Mammary epithelial cell (primary cell): ENCODE measurements at regions of chr16 and their contacts with region 1.

Region 1: GRCh38 chr16:19067349-19068236 is at the start of gene COQ7:
- DNase-seq: peak; percentile 99
- H3K4me3 ChIP-seq: peak within 1 kb of the TSS; percentile 65 to 86 (median 75)
- H3K27ac ChIP-seq: peak within 1 kb of the TSS; percentile 100
- H3K4me1 ChIP-seq: peaks cover 5% of the 10 kb centered on the region
- H3K27me3 ChIP-seq: no peaks in the 10 kb centered on the region
- CTCF ChIP-seq: no peak
- total RNA-seq, gene COQ7: 6.7 to 15.7 TPM

Region 2: DNA sequence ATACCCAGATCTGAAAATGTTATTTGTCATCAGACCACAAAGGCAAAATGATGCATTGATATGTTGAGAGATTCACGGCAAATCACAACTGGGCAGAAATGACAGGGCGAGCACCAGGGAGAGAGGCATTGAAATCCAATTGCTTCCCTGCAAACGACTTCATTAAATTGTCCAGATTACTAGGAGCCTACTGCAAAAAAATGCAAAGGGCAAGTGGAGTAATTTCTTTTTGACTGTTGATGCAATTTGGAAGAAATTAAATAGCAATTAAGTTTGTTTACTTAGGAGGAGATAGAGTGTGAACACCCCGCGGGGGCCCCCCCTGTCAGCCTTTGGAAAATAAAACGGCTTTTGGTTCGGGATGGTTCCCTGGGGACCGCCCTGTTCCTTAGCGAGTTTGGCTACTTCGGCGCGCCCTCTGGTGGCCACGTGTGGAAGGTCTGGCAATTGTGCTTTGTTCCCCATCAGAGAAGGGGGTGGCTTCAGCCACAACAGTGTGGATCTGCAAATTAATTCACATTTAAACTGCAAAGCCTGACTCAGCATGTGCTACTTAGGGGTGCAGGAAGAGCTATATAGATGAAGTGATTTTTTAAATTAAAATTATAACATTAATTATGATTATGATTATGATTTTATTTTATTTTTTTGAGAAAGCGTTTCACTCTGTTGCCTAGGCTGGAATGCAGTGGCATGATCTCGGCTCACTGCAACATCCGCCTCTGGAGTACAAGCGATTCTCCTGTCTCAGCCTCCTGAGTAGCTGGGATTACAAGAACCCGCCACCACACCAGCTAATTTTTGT is 98.3 kb before region 1 on chr16:
- CTCF ChIA-PET with region 1: no interaction called
- dilution Hi-C with region 1: loop called (anchors 5 kb)
- in situ Hi-C with region 1: no loop called
- intact Hi-C with region 1: no loop called
- DNase-seq: peak; percentile 56
- H3K4me3 ChIP-seq: peak overlapping the region; percentile 16 to 20 (median 19)
- H3K27ac ChIP-seq: no peak overlapping the region
- H3K4me1 ChIP-seq: peaks cover 4% of the 10 kb centered on the region
- H3K27me3 ChIP-seq: no peaks in the 10 kb centered on the region
- CTCF ChIP-seq: peak; percentile 78 to 95

Region 3: DNA sequence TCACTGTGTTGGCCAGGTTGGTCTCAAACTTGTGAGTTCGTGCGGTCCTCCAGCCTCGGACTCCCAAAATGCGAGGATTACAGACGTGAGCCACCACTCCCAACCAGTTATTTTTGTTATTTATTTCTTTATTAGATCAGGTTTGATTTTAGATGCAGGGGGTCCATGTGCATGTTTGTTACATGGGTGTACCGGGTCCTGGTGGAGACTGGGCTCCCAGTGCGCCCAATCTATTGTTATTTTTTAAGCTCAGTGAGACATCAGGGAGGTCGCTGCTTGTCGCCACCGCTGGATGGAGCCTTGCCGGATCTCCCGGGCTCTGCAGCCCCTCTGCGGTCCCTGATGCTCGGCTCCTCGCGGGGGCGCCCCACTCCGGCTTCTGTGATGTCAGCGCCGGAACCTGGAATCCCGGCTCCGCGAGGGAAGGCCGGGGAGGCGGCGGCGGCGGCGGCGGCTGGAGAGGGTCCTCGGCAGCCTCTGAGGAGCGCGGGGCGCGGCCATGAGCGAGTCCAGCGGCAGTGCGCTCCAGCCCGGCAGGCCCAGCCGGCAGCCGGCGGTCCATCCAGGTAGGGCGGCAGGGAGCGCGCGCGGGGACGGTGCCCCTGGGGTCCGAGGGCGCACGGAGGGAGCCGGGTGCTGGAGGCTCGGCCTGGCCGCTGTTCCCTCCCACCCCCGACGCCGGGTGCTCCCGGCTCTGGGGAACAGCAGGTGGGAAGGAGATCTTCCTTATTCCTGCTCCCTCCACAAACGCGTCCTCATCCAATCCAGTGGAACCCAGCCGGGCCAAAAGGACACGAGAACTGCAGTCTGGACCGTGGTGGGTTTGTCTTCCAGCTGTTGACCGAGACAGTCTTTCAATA is 83.8 kb before region 1 on chr16 and contains the start of gene TMC7:
- CTCF ChIA-PET with region 1: interaction called, 8 read pairs
- dilution Hi-C with region 1: no loop called
- in situ Hi-C with region 1: loop called (anchors 5 to 10 kb)
- intact Hi-C with region 1: loop called (anchors 1 kb)
- DNase-seq: peak; percentile 83
- H3K4me3 ChIP-seq: peak within 1 kb of the TSS; percentile 56 to 82 (median 76)
- H3K27ac ChIP-seq: peak within 1 kb of the TSS; percentile 75
- H3K4me1 ChIP-seq: peaks cover 6% of the 10 kb centered on the region
- H3K27me3 ChIP-seq: no peaks in the 10 kb centered on the region
- CTCF ChIP-seq: peak; percentile 57 to 96
- total RNA-seq, gene TMC7: 13.7 to 17.5 TPM

Region 4: DNA sequence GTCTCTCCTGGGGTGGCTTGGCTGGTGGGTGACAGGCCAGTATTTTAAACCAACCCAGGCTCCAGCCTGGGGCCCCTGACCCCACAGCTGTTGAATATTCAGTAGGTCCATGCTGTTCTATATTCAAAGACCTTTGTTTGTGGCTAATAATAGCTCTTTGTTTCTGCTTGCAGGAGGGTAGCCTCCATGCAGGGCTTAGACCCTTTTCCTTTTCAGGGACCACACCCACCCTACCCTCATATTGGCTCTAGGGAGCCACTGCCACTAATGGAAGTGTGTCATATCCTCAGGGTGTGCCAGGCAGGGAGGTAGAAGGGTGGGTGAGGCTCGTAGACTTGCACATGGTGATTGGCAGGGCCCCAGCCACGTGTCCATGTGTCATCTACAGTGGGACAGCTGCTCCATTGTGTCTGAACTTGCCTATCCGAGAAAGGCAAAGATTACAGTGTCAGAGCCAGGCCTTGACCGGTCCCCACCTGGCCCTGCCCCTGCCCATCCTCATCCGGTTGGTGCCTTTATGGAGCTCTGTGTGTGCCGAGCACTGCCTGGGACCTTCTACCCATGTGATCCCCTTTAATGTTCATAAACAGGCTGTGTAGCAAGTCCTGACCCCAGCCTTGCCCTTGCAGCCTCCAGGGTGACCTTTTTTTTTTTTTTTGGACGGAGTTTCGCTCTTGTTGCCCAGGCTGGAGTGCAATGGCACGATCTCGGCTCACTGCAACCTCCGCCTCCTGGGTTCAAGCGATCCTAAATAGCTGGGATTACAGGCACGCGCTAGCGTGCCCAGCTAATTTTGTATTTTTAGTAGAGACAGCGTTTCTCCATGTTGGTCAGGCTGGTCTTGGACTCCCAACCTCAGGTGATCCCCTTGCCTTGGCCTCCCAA is 61.8 kb before region 1 on chr16:
- CTCF ChIA-PET with region 1: interaction called, 3 read pairs
- dilution Hi-C with region 1: no loop called
- in situ Hi-C with region 1: loop called in 1 of 2 experiments (anchors 10 kb)
- intact Hi-C with region 1: no loop called
- DNase-seq: peak; percentile 99
- H3K4me3 ChIP-seq: no peak overlapping the region
- H3K27ac ChIP-seq: peak overlapping the region; percentile 97
- H3K4me1 ChIP-seq: peaks cover 64% of the 10 kb centered on the region
- H3K27me3 ChIP-seq: no peaks in the 10 kb centered on the region
- CTCF ChIP-seq: no peak

Region 5: DNA sequence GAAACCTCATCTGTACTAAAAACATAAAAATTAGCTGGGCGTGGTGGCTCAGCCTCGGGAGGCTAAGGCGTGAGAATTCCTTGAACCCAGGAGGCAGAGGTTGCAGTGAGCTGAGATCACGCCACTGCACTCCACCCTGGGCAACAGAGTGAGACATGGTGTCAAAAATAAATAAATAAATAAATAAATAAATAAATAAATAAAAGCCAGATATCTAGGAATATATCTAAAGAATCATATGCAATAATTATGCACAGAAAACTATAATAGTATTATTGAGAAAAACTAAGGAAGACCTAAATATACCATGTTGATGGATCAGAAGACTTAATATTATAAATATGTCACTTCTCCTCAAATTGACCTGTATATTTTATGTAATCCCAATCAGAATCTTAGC is 46.9 kb before region 1 on chr16:
- CTCF ChIA-PET with region 1: no interaction called
- dilution Hi-C with region 1: loop called (anchors 5 kb)
- in situ Hi-C with region 1: no loop called
- intact Hi-C with region 1: no loop called
- DNase-seq: no peak
- H3K4me3 ChIP-seq: no peak overlapping the region
- H3K27ac ChIP-seq: no peak overlapping the region
- H3K4me1 ChIP-seq: no peaks in the 10 kb centered on the region
- H3K27me3 ChIP-seq: no peaks in the 10 kb centered on the region
- CTCF ChIP-seq: no peak

Region 6: DNA sequence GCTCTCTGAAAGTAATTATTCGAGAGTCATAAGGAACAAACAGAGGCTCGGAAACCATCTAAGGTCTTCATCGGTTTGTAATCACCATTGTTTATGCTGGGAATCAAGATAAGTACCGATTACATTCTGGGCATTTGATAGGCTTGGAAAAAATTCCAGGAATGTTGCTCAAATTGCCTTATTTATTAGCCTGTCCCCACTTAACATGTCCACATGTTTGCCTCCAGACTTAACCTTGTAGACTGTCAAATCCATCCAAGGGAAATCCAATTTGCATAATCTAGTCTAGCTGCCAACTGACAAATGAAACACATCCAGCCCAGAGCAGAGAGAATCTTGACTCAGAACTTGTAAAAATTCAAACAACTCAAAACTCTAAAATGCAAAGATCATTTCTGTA is 298.8 kb after region 1 on chr16:
- CTCF ChIA-PET with region 1: no interaction called
- dilution Hi-C with region 1: loop called (anchors 5 kb)
- in situ Hi-C with region 1: no loop called
- intact Hi-C with region 1: no loop called
- DNase-seq: no peak
- H3K4me3 ChIP-seq: no peak overlapping the region
- H3K27ac ChIP-seq: no peak overlapping the region
- H3K4me1 ChIP-seq: no peaks in the 10 kb centered on the region
- H3K27me3 ChIP-seq: peaks cover 3% of the 10 kb centered on the region
- CTCF ChIP-seq: no peak

Region 7: DNA sequence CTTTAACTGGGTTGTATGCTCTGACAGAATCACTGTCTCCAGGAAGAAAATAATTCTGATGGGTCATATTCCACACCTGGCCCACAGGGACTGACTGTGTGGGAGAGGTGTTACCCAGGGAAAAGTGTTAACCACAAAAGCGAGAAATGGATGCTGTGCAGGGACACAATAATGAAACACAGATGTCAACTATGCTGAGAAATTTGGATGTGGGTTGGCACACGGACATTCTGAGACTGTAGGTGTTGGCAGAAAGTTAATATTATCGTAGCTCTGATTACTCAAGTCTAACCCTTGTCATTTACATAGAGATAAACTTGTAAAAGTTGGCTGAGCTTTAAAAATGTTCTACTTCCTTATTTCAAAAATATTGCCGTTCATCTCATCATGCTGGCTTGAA is 369.7 kb after region 1 on chr16:
- CTCF ChIA-PET with region 1: interaction called, 10 read pairs
- dilution Hi-C with region 1: no loop called
- in situ Hi-C with region 1: no loop called
- intact Hi-C with region 1: no loop called
- DNase-seq: no peak
- H3K4me3 ChIP-seq: no peak overlapping the region
- H3K27ac ChIP-seq: no peak overlapping the region
- H3K4me1 ChIP-seq: no peaks in the 10 kb centered on the region
- H3K27me3 ChIP-seq: no peaks in the 10 kb centered on the region
- CTCF ChIP-seq: no peak